K562 (cell line): ENCODE measurements at regions of chr19 and their contacts with region 1.

Region 1: DNA sequence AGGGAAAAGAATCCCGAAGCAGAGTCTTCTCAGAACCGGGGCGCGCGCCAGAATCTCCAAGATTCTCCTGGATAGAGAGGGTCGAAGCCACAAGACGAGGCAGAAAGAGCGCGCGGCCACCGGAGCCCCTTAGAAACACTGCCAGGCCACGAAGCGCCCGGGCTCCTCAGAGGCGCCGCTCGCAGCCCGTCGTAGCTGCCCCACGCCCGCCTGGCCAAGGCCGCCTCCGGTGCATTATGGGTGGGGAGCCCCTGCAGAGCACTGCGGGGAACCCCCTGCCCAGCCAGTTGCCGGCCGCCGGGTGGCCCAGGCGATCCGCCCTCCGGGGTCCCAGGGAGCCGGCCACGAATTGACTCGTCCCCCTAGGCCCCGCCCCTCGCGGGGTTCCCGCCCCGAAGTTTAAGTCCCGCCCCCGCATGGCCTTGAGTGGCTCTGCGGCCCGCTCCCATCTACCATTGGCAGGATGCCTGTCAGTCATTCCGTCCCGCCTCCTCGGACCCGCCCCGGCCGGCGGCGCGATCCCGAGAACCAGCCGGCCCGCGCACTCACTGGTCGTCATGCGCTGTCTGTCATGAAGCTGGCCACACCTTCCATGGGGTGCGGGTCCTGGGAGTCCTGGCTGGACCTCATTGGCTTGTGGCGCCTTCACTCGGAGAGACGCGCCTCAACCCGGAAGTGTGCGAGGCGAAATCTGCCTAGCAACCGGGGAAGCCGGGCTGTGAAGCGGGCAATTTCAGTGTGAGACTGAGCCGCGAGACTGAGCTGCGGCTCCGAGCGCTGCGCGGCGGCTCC is 20.2 kb upstream of the GATAD2A start:
- DNase-seq: peak; percentile 95 to 100 (median 96)
- ATAC-seq: peak; percentile 93
- H3K4me3 ChIP-seq: peak overlapping the region; percentile 96
- H3K27ac ChIP-seq: peak overlapping the region; percentile 97
- H3K4me1 ChIP-seq: peaks cover 28 to 31% of the 10 kb centered on the region in 2 experiments; a peak in 4 of 5 replicates
- H3K27me3 ChIP-seq: no peaks in the 10 kb centered on the region
- CTCF ChIP-seq: peak in 2 of 3 experiments; percentile 25 to 38; a peak in 3 of 6 replicates
- EP300 ChIP-seq: no peak; the same call in 1 of the 2 replicates
- POLR2A ChIP-seq: peak; percentile 89
- RAD21 ChIP-seq: peak; percentile 8 to 48; a peak in 2 of 4 replicates

Region 2: GRCh38 chr19:18388100-18388959 is 997.0 kb before region 1 on chr19:
- CTCF ChIA-PET with region 1: no interaction called
- POLR2A ChIA-PET with region 1: no interaction called
- in situ Hi-C with region 1: no loop called
- intact Hi-C with region 1: no loop called
- DNase-seq: peak; percentile 88 to 92 (median 90)
- ATAC-seq: peak; percentile 55
- H3K4me3 ChIP-seq: peak overlapping the region; percentile 89
- H3K27ac ChIP-seq: peak overlapping the region; percentile 84
- H3K4me1 ChIP-seq: peaks cover 17 to 47% of the 10 kb centered on the region in 2 experiments
- H3K27me3 ChIP-seq: no peaks in the 10 kb centered on the region
- CTCF ChIP-seq: peak; percentile 95 to 97 (median 96)
- EP300 ChIP-seq: peak; percentile 7; the same call in 1 of the 2 replicates
- POLR2A ChIP-seq: peak; percentile 64
- RAD21 ChIP-seq: peak; percentile 60 to 70

Region 3: GRCh38 chr19:19349365-19349905 is 35.9 kb before region 1 on chr19:
- CTCF ChIA-PET with region 1: no interaction called
- POLR2A ChIA-PET with region 1: no interaction called
- in situ Hi-C with region 1: no loop called
- intact Hi-C with region 1: no loop called
- DNase-seq: no peak
- ATAC-seq: no peak
- H3K4me3 ChIP-seq: no peak overlapping the region
- H3K27ac ChIP-seq: no peak overlapping the region
- H3K4me1 ChIP-seq: peaks cover 0 to 11% of the 10 kb centered on the region in 2 experiments; a peak in 2 of 5 replicates
- H3K27me3 ChIP-seq: no peaks in the 10 kb centered on the region
- CTCF ChIP-seq: no peak
- EP300 ChIP-seq: no peak
- POLR2A ChIP-seq: no peak
- RAD21 ChIP-seq: no peak

Region 4: DNA sequence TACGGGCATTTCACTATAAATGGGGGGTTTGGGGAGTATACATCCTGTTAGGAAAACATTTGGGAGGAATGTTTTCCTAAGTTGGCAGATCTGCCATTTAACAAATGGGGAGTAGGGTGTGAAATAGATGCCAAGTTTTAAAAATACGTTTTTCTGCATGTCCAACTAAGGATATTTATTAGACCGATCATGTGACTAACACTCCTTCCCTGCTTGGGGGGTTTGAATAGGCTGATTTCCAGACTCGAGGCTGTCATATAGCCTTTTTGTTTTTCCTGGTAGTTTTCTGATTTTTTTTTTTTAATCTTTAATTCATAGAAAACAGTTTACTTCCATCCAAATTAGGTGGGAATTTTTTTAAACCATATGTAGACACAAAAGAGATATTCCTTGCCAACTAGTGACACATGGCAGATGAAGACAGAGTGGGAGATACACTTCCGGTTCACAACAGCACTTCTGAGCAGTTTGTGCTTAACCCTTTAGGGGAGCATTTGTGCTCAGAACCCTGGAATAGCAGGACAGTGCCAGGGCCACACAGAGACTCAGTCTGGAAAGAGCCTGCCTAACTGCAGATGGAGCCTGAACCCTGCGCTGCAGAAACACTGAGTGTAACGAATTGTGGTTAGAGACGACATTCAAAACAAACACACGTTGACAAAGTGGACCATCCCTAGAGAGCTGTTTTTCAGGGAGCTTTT is 14.6 kb after region 1 on chr19:
- CTCF ChIA-PET with region 1: no interaction called
- POLR2A ChIA-PET with region 1: interaction called, 24 read pairs
- in situ Hi-C with region 1: no loop called
- intact Hi-C with region 1: loop called (anchors 2 kb)
- DNase-seq: no peak
- ATAC-seq: peak; percentile 20; the same call in 2 of the 3 replicates
- H3K4me3 ChIP-seq: no peak overlapping the region
- H3K27ac ChIP-seq: no peak overlapping the region
- H3K4me1 ChIP-seq: peaks cover 29 to 38% of the 10 kb centered on the region in 2 experiments
- H3K27me3 ChIP-seq: no peaks in the 10 kb centered on the region
- CTCF ChIP-seq: no peak
- EP300 ChIP-seq: no peak
- POLR2A ChIP-seq: no peak
- RAD21 ChIP-seq: no peak